ENCODE measurements at regions of chr9 and their contacts with region 1.

Region 1: GRCh38 chr9:96418074-96418809 is at the start of gene ZNF367:
- DNase-seq: peak; percentile 94
- H3K4me3 Mint-ChIP-seq: peak within 1 kb of the TSS; percentile 94
- H3K27ac Mint-ChIP-seq: peak within 1 kb of the TSS; percentile 93
- H3K4me1 Mint-ChIP-seq: peaks cover 19% of the 10 kb centered on the region
- H3K27me3 Mint-ChIP-seq: no peaks in the 10 kb centered on the region
- CTCF ChIP-seq: no peak
- total RNA-seq, gene ZNF367: 8.6 and 9.6 TPM in 2 replicates

Region 2: DNA sequence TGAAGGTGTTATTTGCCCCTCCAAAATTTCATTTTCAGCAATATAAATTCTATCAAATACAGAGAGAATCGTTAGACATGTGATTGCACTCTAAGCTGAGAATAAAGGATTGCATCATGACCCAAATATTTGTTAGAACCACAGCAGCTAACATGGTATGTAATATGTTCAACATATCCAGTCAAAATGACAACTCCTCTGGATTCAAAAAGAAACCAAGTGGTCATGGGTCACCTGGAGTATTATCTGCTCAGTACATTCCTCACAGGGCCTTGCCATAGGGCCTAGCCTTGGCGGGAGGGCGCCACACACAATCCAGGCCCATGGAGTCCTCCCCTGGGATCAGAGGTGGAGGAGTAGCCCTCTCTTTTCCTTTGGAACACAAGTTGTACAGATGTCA is 295.5 kb before region 1 on chr9:
- CTCF ChIA-PET with region 1: no interaction called
- intact Hi-C with region 1: no loop called
- DNase-seq: no peak
- H3K4me3 Mint-ChIP-seq: no peak overlapping the region
- H3K27ac Mint-ChIP-seq: no peak overlapping the region
- H3K4me1 Mint-ChIP-seq: peaks cover 15% of the 10 kb centered on the region
- H3K27me3 Mint-ChIP-seq: no peaks in the 10 kb centered on the region
- CTCF ChIP-seq: no peak

Region 3: DNA sequence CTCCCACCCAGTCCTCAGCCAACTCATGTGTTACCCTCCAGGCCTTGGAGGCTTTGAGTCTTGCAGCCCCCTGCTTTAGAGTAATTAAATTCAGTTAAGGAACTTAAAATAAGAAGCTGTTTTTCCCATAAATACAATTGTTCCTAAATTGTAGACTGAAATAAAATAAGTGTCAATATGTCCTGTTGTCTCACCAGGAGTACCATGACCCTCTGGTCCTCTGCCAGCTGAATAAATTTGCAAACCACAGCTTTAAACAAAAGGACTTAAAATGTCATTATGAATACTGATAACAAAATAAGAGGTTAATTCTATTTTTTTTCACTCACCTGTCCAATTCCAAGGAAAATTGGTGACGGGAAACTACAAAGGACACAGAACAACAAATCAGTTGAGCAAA is 50.3 kb before region 1 on chr9:
- CTCF ChIA-PET with region 1: no interaction called
- intact Hi-C with region 1: no loop called
- DNase-seq: no peak
- H3K4me3 Mint-ChIP-seq: no peak overlapping the region
- H3K27ac Mint-ChIP-seq: no peak overlapping the region
- H3K4me1 Mint-ChIP-seq: peaks cover 7% of the 10 kb centered on the region
- H3K27me3 Mint-ChIP-seq: no peaks in the 10 kb centered on the region
- CTCF ChIP-seq: no peak

Region 4: GRCh38 chr9:96391021-96391765 is 27.0 kb before region 1 on chr9:
- CTCF ChIA-PET with region 1: interaction called, 4 read pairs
- intact Hi-C with region 1: loop called (anchors 2 kb)
- DNase-seq: peak; percentile 73
- H3K4me3 Mint-ChIP-seq: no peak overlapping the region
- H3K27ac Mint-ChIP-seq: peak overlapping the region; percentile 72
- H3K4me1 Mint-ChIP-seq: peaks cover 7% of the 10 kb centered on the region
- H3K27me3 Mint-ChIP-seq: no peaks in the 10 kb centered on the region
- CTCF ChIP-seq: no peak